Left cardiac atrium (tissue), 4 donors: ENCODE measurements at regions of chr20 and their contacts with region 1.

Region 1: GRCh38 chr20:63657937-63658748 is at the start of gene RTEL1:
- DNase-seq: peak; percentile 94
- ATAC-seq: peak; percentile 95
- total RNA-seq, gene RTEL1: 13.5 to 17.3 TPM

Region 2: GRCh38 chr20:63707549-63708300 is 49.6 kb after region 1 on chr20 and contains the starts of genes ARFRP1 and ZGPAT:
- intact Hi-C with region 1: loop called in 1 of 2 experiments (anchors 1 kb)
- DNase-seq: peak; percentile 92
- ATAC-seq: peak; percentile 95 to 97
- total RNA-seq, gene ARFRP1: 36.8 to 44.9 TPM
- total RNA-seq, gene ZGPAT: 16.4 to 18.6 TPM

Region 3: DNA sequence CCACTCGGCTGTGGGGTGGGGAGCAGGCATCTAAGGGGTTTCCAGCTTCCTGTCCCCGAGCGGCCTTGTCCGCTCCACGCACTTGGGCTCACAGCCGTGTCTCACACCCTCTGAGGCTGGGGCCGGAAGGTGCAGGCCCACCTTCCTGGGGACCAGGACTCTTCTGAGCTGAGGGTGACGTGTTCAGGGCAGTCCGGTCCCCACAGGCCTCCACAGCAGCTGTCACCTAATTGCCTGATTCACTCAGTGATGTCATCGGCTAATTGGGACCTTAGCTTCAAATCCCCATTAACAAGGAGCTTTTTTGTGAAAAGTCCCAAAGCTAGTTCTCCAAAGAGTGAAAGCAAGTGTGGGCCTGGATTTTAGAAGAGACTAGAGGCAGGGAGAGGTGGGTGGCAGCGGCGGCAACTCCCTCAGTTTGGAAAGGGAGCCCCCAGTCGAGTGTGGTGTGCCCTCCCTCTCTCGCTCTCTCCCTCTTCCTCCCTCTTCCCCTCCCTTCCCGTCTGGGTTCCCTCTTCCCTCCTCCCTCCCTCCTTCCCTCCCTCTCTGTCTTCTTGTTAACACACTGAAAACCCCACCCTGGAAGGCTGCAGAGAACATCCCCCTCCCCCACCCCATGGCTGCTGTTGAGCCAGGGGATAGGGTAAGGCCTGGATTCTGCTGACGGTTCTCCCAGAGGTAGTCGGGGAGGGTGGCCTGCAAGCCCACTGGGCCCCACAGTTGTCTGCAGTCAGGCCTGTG is 545.1 kb after region 1 on chr20:
- intact Hi-C with region 1: no loop called
- DNase-seq: no peak
- ATAC-seq: peak in 1 of 2 donors; percentile 24